ENCODE measurements at regions of chr1 and their contacts with region 1.

Region 1: GRCh38 chr1:107016376-107016978 is 40.0 kb upstream of the PRMT6 start:
- DNase-seq: no peak
- ATAC-seq: no peak
- H3K4me3 ChIP-seq: no peak overlapping the region
- H3K27ac ChIP-seq: no peak overlapping the region
- H3K4me1 ChIP-seq: no peaks in the 10 kb centered on the region
- H3K27me3 ChIP-seq: no peaks in the 10 kb centered on the region
- CTCF ChIP-seq: no peak
- EP300 ChIP-seq: no peak
- POLR2A ChIP-seq: no peak
- RAD21 ChIP-seq: no peak

Region 2: GRCh38 chr1:107000902-107001301 is 15.6 kb before region 1 on chr1:
- CTCF ChIA-PET with region 1: no interaction called
- POLR2A ChIA-PET with region 1: no interaction called
- in situ Hi-C with region 1: no loop called
- intact Hi-C with region 1: no loop called
- DNase-seq: no peak
- ATAC-seq: no peak
- H3K4me3 ChIP-seq: no peak overlapping the region
- H3K27ac ChIP-seq: no peak overlapping the region
- H3K4me1 ChIP-seq: no peaks in the 10 kb centered on the region
- H3K27me3 ChIP-seq: no peaks in the 10 kb centered on the region
- CTCF ChIP-seq: no peak
- EP300 ChIP-seq: no peak
- POLR2A ChIP-seq: no peak
- RAD21 ChIP-seq: no peak

Region 3: DNA sequence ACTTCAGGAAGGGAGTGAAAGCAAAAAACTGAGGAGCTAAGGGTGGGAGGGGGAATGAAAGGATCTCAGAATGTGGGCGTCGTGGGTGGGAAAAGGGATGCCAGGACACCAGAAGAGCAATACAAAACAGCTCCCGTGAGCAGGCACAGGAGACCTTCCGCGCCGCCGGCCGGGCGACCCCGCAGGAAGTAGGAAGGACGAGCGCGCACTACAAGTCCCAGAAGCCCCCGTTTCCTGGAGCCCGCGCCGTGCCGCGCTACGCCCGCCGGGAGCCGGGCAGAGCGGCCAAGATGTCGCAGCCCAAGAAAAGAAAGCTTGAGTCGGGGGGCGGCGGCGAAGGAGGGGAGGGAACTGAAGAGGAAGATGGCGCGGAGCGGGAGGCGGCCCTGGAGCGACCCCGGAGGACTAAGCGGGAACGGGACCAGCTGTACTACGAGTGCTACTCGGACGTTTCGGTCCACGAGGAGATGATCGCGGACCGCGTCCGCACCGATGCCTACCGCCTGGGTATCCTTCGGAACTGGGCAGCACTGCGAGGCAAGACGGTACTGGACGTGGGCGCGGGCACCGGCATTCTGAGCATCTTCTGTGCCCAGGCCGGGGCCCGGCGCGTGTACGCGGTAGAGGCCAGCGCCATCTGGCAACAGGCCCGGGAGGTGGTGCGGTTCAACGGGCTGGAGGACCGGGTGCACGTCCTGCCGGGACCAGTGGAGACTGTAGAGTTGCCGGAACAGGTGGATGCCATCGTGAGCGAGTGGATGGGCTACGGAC is 40.1 kb after region 1 on chr1 and contains the start of gene PRMT6:
- CTCF ChIA-PET with region 1: no interaction called
- POLR2A ChIA-PET with region 1: no interaction called
- in situ Hi-C with region 1: no loop called
- intact Hi-C with region 1: loop called (anchors 5 kb)
- DNase-seq: peak; percentile 68 to 91 (median 77)
- ATAC-seq: peak; percentile 94
- H3K4me3 ChIP-seq: peak within 1 kb of the TSS; percentile 77
- H3K27ac ChIP-seq: peak within 1 kb of the TSS; percentile 87
- H3K4me1 ChIP-seq: peaks cover 3 to 19% of the 10 kb centered on the region in 2 experiments; a peak in 3 of 5 replicates
- H3K27me3 ChIP-seq: no peaks in the 10 kb centered on the region
- CTCF ChIP-seq: no peak
- EP300 ChIP-seq: no peak
- POLR2A ChIP-seq: peak; percentile 89
- RAD21 ChIP-seq: no peak
- polyA plus RNA-seq, gene PRMT6: 6.1 to 7.0 TPM

Measured in K562 (cell line).